Left colon (tissue), 2 donors: ENCODE measurements at regions of chr3 and their contacts with region 1.

Region 1: GRCh38 chr3:146065573-146066006 is 95.4 kb downstream of the PLOD2 start:
- DNase-seq: no peak
- ATAC-seq: no peak

Region 2: GRCh38 chr3:146189519-146190173 is 124.1 kb after region 1 on chr3:
- intact Hi-C with region 1: loop called in 1 of 2 experiments (anchors 2 kb)
- DNase-seq: no peak
- ATAC-seq: peak; percentile 83